Activated T-helper 1 cell treated with anti-CD3 and anti-CD28 coated beads, Interleukin-12 subunit alpha, Interleukin-12 subunit beta, Interleukin-2, Interleukin-4 antibody, amounts not matched to agents 30 ng/mL and 10 ng/mL and 1 ng/mL, durations not matched to agents 14 hours and 24 hours and 36 hours (primary cell): ENCODE measurements at regions of chr2 and their contacts with region 1.

Region 1: DNA sequence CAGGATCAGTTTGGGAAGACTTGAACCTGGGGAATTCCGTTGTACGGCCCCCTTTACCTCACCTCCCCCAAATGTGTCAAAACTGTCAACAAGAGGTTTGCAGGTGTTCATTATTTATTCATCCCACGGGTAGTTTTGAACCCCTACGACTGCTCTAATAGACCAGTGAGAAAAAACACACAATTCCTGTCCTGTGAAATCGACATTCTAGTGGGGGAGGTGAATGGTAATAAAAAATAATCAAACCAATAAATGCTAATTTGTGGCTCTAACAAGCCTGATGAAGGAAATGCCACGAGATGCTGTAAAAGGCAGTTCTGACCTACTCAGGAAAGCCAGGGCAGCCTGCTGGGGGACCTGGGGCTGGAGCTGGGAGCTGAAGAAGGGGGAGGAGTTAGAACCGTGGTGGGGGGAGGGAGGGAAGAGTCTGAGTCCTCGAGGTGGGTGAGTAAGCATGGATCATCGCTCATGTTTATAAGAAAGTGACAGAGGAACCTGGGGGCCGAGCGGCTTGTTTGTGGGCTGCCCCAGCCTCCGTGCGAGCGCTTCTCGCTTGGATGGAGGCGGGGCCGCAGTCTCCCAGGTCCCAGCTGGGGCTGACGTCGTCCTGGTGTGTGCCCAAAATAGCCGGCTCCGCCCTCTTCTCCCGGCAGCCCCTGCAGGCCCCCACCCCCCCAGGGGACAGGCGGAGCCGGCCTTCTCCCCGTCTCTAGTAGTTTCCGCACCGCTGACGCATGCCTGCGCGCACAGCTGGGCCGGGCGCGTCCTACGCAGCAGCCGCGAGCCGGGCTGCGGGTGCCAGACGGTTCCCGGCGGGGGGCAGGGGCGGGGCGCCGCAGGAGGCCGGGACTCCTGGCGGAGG is at the start of gene DNAJB2:
- DNase-seq: peak; percentile 99
- H3K4me3 Mint-ChIP-seq: peak within 1 kb of the TSS; percentile 94
- H3K27ac Mint-ChIP-seq: peak within 1 kb of the TSS; percentile 99
- H3K4me1 Mint-ChIP-seq: peaks cover 45% of the 10 kb centered on the region
- H3K27me3 Mint-ChIP-seq: peaks cover under 1% of the 10 kb centered on the region
- total RNA-seq, gene DNAJB2: 40.8 and 45.3 TPM in 2 replicates

Region 2: GRCh38 chr2:219206442-219207253 is 72.2 kb before region 1 on chr2 and contains the start of gene ZFAND2B:
- intact Hi-C with region 1: loop called (anchors 1 kb)
- DNase-seq: peak; percentile 96
- H3K4me3 Mint-ChIP-seq: peak within 1 kb of the TSS; percentile 92
- H3K27ac Mint-ChIP-seq: peak within 1 kb of the TSS; percentile 99
- H3K4me1 Mint-ChIP-seq: peaks cover 40% of the 10 kb centered on the region
- H3K27me3 Mint-ChIP-seq: no peaks in the 10 kb centered on the region
- total RNA-seq, gene ZFAND2B: 35.0 and 41.3 TPM in 2 replicates

Region 3: DNA sequence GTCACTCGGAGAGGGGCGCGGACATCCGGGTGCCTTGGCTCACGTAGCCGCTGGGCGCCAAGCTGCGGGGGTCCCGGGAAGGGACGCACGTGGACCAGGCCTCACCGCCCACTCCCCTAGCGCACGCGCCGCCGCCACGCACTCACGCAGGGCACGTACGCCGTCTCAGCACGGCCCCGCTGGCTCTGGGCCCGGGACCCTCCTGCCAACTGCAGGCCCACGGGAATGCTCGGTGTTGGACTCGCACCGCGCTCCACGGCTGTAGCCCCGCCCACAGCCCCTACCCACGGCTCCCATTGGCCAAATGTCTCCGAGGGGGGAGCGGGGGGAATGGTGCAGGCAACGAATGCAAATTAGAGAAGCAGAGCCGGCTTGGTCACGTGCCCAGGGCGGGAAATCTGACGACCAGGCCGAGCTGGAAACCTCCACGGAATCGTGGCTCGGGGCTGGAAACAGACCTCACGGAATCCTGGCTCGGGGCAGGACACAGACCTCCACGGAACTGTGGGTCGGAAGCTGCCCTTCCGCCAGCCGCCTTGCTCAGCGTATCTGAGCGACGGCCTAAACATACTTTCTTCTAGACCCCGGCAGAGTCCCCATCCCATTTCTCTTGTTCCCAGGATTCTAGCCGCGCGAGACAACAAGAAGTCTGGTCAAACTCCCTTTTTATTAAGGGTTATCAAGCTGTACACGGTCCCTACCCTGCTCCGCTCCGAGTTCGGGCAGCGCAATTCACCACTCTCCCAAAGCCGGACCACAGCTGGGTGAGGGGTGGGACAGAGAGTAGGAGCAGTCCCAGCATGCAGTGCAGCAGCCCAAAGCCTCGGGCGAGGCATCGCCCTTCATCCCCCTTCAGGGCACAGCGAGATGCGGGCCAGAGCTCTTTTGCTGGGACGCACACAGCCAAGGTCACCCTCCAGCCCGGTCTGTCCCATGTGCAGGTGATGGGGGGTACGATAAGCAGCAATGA is 59.9 kb before region 1 on chr2 and contains the start of gene ABCB6:
- intact Hi-C with region 1: loop called (anchors 1 kb)
- DNase-seq: peak; percentile 86
- H3K4me3 Mint-ChIP-seq: peak within 1 kb of the TSS; percentile 87
- H3K27ac Mint-ChIP-seq: peak within 1 kb of the TSS; percentile 86
- H3K4me1 Mint-ChIP-seq: peaks cover 23% of the 10 kb centered on the region
- H3K27me3 Mint-ChIP-seq: no peaks in the 10 kb centered on the region
- total RNA-seq, gene ABCB6: 31.9 and 32.9 TPM in 2 replicates

Region 4: DNA sequence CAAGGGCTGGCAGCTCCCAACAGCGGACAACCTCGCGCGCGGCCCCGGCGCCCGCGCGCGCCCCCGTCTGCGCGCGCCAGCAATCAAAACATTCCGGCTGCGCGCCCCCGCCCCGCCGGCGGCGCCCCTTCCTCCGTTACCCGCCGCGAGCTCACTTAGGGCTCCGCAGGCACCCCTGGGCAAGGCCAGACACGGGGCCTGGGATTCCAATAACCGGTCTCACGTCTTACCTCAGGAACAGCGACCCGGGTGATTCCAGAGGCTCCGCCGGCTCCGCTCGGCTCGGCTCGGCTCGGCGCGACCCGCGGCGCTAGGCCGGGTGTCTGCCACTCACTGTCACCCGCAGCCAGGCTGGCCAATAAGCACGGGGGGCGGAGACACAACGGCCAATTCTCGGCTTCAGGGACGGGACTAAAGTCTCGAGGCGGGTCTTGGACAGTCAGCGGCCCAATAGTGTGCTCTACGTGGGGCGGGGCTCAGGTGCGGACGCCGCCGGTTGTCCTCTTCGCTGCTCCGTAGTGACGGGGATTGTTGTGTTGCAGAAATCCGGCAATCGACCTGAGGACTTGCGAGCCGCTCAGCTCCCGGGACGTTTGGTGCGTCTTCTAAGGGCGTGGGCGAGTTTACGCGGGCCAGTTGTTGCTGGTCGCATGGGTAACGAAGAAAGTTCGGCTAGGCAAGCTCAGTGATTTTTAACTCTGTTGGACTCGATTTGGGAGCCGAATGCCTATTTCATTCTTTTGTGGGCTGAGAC is 49.4 kb before region 1 on chr2 and contains the starts of genes ANKZF1 and ATG9A:
- intact Hi-C with region 1: loop called (anchors 1 kb)
- DNase-seq: peak; percentile 98
- H3K4me3 Mint-ChIP-seq: peak within 1 kb of the TSS; percentile 97
- H3K27ac Mint-ChIP-seq: peak within 1 kb of the TSS; percentile 99
- H3K4me1 Mint-ChIP-seq: peaks cover 47% of the 10 kb centered on the region
- H3K27me3 Mint-ChIP-seq: no peaks in the 10 kb centered on the region
- total RNA-seq, gene ANKZF1: 112 and 117 TPM in 2 replicates
- total RNA-seq, gene ATG9A: 55.3 and 57.0 TPM in 2 replicates

Region 5: GRCh38 chr2:219245148-219245898 is 33.6 kb before region 1 on chr2 and contains the starts of genes GLB1L and STK16:
- intact Hi-C with region 1: loop called (anchors 2 kb)
- DNase-seq: peak; percentile 89
- H3K4me3 Mint-ChIP-seq: peak within 1 kb of the TSS; percentile 99
- H3K27ac Mint-ChIP-seq: peak within 1 kb of the TSS; percentile 99
- H3K4me1 Mint-ChIP-seq: peaks cover 57% of the 10 kb centered on the region
- H3K27me3 Mint-ChIP-seq: no peaks in the 10 kb centered on the region
- total RNA-seq, gene GLB1L: 4.6 and 4.9 TPM in 2 replicates
- total RNA-seq, gene STK16: 30.1 and 30.6 TPM in 2 replicates

Region 6: GRCh38 chr2:219253753-219254590 is 24.9 kb before region 1 on chr2 and contains the start of gene TUBA4A:
- intact Hi-C with region 1: loop called (anchors 1 kb)
- DNase-seq: peak; percentile 87
- H3K4me3 Mint-ChIP-seq: peak within 1 kb of the TSS; percentile 93
- H3K27ac Mint-ChIP-seq: peak within 1 kb of the TSS; percentile 98
- H3K4me1 Mint-ChIP-seq: peaks cover 50% of the 10 kb centered on the region
- H3K27me3 Mint-ChIP-seq: no peaks in the 10 kb centered on the region
- total RNA-seq, gene TUBA4A: 211 and 217 TPM in 2 replicates

Region 7: DNA sequence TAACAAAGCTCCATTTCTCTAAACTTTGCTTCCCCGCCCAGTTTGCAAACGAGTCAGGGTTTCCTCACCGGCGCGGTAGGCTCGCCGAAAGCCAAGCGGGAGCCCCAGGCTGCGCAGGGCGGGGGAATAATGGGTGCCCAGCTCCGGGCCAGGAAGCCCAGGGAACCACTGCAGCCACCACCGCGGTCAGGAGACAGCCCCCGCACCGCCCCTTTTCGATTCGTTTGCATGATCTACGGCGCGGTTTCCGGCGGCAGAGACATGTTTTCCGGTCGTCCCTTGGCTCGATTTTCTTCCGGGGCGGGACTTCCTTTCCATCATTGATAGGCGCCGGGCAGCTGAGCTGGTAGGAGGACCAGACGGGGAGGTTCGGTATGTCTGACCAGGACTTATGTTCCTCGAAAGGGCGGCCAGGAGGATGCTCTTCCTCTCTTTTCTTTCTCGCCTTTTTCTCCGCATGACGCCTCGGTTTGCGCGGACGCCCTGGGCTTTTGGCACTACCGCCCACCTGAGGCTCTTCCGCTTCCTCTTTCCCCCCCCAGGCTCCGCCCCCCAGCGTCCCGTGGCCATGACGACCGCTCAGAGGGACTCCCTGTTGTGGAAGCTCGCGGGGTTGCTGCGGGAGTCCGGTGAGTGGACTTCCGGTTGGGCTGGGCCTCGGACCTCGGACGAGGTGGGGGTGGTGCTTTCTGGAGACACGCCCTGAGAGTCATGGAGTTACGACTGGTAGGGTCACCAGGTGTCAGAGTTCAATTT is 318.8 kb after region 1 on chr2 and contains the start of gene STK11IP:
- intact Hi-C with region 1: loop called (anchors 1 kb)
- DNase-seq: peak; percentile 89
- H3K4me3 Mint-ChIP-seq: peak within 1 kb of the TSS; percentile 90
- H3K27ac Mint-ChIP-seq: peak within 1 kb of the TSS; percentile 96
- H3K4me1 Mint-ChIP-seq: peaks cover 26% of the 10 kb centered on the region
- H3K27me3 Mint-ChIP-seq: peaks cover 2% of the 10 kb centered on the region
- total RNA-seq, gene STK11IP: 38.0 and 38.9 TPM in 2 replicates